ENCODE measurements at regions of chr4 and their contacts with region 1.

Region 1: DNA sequence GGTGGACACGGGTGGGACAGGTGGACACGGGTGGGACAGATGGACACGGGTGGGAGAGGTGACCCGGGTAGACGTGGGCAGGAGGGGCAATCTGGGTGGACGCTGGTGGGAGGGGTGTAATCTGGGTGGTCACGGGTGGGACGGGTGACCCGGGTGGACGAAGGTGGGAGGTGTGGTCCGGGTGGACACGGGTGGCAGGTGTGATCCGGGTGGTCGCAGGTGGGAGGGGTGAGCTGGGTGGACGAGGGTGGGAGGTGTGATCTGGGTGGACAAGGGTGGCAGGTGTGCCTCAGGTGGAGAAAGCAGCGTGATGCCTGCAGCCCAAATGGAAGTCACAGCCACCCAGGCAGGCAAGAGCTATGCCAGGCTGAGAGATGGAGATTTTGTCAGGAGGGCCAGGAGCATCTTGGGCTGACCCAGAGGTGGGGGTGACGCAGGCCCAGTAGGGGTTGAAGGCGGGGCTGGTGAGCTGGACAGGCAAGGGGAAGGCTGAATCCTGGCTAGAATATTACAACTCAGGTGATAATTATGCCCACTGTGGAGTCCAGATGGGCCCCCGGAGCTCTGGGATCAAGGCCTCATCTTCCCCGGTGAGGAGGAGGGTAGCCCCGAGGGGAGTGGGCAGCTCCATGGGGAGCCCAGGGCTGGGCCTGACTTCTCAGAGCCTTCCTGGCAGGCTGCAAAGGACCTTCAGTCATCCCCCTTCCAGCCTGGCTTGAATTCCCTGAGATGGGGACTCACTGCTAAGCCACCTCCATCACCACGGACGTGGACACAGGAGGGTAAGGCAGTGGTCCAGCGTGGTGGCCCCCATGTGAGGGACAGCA is 100.0 kb downstream of the ADRA2C start:
- DNase-seq: no peak
- H3K4me3 ChIP-seq: no peak overlapping the region
- H3K27ac ChIP-seq: no peak overlapping the region
- H3K4me1 ChIP-seq: no peaks in the 10 kb centered on the region
- H3K27me3 ChIP-seq: peaks cover 86% of the 10 kb centered on the region
- CTCF ChIP-seq: no peak

Region 2: GRCh38 chr4:3461478-3462291 is 404.5 kb before region 1 on chr4:
- CTCF ChIA-PET with region 1: interaction called, 10 read pairs
- POLR2A ChIA-PET with region 1: no interaction called
- intact Hi-C with region 1: no loop called
- DNase-seq: peak; percentile 89 to 96
- H3K4me3 ChIP-seq: no peak overlapping the region
- H3K27ac ChIP-seq: no peak overlapping the region
- H3K4me1 ChIP-seq: peaks cover 21% of the 10 kb centered on the region
- H3K27me3 ChIP-seq: no peaks in the 10 kb centered on the region; the same call in 1 of the 2 replicates
- CTCF ChIP-seq: no peak

Region 3: DNA sequence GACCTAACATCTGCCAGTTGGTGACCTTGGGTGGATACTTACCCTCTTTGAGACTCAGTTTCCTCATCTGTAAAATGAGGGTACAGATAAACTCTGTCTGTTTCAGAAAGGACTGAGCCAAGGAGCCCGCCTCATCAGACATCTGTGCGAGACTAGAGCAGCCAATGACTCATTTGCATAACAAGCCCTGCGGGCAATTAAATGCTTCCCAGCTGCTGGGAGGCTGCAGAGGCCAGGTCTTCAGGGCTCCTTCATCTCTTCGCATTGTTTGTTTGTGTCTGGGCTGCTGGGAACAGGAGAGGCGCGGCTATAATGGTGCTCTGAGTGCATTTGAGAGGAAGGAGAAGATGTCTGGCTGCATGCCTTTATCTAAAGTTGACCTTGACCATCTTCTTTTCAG is 15.0 kb before region 1 on chr4:
- CTCF ChIA-PET with region 1: no interaction called
- POLR2A ChIA-PET with region 1: no interaction called
- intact Hi-C with region 1: no loop called
- DNase-seq: no peak
- H3K4me3 ChIP-seq: no peak overlapping the region
- H3K27ac ChIP-seq: no peak overlapping the region
- H3K4me1 ChIP-seq: no peaks in the 10 kb centered on the region
- H3K27me3 ChIP-seq: peaks cover 59% of the 10 kb centered on the region
- CTCF ChIP-seq: no peak

Measured in PC-9 (cell line).